Heart right ventricle (tissue), 16 donors: ENCODE measurements at regions of chr11 and their contacts with region 1.

Region 1: DNA sequence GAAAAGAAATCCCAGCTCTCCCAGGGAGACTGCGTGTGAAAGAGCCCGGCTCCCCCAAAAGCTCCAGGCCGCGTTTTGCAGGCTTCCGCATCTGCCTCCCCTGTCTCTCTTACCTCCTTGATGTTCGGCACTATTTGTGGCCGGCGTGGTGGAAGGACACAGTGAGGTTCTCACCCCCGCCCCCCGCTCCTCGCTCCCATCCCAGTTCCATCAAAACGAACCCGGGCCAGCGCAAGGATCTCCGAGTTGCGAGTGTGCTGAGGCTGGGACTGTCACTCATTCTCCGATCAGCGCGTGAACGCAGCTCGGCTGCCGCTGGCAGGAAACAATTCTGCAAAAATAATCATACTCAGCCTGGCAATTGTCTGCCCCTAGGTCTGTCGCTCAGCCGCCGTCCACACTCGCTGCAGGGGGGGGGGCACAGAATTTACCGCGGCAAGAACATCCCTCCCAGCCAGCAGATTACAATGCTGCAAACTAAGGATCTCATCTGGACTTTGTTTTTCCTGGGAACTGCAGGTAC is at the start of gene NCAM1:
- DNase-seq: peak; percentile 85 to 88
- ATAC-seq: peak; percentile 35 to 79 (median 69)
- H3K4me3 ChIP-seq: peak within 1 kb of the TSS; percentile 29 to 78 (median 64)
- H3K27ac ChIP-seq: peak within 1 kb of the TSS; percentile 49 to 88 (median 80)
- H3K4me1 ChIP-seq: peaks cover 0 to 34% (median 11%) of the 10 kb centered on the region in 9 donors
- H3K27me3 ChIP-seq: peaks cover 0 to 98% (median 35%) of the 10 kb centered on the region in 7 donors
- CTCF ChIP-seq: no peak
- total RNA-seq, gene NCAM1: 220 to 454 (median 338) TPM

Region 2: DNA sequence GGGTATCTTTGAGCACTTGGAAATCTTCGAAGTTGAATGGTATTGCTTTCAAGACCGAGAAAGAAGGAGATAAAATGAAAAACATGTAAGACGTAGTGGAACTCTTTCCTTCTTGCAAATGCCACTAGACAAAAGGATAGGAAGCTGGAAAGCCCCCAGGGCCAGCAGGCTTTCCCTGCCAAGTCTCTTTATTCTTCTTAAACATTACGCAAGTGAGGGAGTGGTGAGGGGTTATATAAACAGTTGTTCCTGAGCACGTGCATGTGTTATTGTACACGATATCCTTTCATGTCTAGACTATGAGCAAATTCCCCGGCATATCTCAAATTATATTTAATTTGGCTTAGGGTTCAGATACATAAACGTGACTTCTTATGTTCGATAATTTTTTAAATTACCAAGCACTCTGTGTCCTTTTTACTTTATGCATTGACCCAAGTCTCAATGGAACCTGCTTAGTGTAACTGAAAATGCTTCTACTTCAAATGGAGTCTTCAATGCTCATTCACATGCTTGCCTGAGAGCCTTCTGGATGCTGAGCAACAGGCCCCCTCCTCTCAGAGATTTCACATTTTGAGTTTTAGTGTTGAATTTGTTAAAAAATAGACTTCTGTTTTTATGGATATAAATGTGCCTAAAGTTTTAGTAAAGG is 1254.0 kb before region 1 on chr11:
- intact Hi-C with region 1: no loop called
- DNase-seq: peak; percentile 38 to 61
- ATAC-seq: peak; percentile 29 to 93 (median 86)
- H3K4me3 ChIP-seq: no peak overlapping the region
- H3K27ac ChIP-seq: peak overlapping the region in 6 of 10 donors; percentile 2 to 67 (median 37)
- H3K4me1 ChIP-seq: peaks cover 0 to 30% (median 11%) of the 10 kb centered on the region in 9 donors
- H3K27me3 ChIP-seq: no peaks in the 10 kb centered on the region
- CTCF ChIP-seq: no peak

Region 3: DNA sequence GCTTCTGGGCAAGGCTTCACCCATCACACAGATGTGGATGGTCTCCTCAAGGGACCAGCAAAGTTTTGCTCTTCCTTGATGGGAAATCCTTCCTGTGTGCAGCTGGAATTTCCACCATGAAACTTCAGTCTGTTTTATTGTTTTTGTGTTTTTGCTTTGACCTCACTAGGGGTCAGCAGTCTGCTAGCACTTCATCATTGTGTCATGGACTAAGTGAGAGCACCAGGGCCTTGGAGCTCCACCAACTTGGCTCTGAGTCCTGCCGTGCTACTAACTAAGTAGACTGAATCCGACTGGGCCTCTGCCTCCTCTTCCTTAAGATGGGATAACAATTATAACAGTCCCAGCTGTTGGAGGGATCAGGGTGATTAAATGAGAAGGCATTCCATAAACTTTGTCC is 305.8 kb before region 1 on chr11:
- intact Hi-C with region 1: loop called in 2 of 10 experiments (anchors 5 to 10 kb)
- DNase-seq: peak; percentile 74 to 87
- ATAC-seq: peak; percentile 55 to 87 (median 84)
- H3K4me3 ChIP-seq: no peak overlapping the region
- H3K27ac ChIP-seq: peak overlapping the region in 7 of 10 donors; percentile 17 to 72 (median 48)
- H3K4me1 ChIP-seq: peaks cover 8 to 67% (median 22%) of the 10 kb centered on the region in 9 donors
- H3K27me3 ChIP-seq: no peaks in the 10 kb centered on the region
- CTCF ChIP-seq: peak in 6 of 9 donors; percentile 8 to 47 (median 29)

Region 4: DNA sequence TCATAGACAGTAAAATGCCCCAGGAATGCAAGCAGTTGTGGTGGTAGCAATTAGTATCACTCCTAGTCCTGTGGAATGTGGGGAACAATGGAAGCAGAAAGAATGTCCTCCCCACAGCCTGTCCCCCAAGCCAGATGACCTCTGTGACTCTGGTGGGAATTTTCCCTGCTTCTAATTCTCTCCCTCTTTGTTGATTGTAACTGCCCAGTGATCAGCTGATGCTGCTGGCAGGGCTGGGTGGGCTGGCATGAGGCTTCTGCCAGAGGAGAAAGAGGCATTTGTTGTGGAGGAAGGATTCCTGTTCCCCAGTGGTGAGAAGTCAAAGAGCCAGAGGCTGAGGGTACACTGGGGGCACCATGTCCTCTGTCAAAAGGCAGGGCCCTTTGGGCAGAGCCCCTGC is 116.7 kb before region 1 on chr11:
- intact Hi-C with region 1: loop called in 4 of 10 experiments (anchors 5 to 10 kb)
- DNase-seq: peak in 1 of 2 donors; percentile 13
- ATAC-seq: peak in 6 of 8 donors; percentile 33 to 72 (median 48)
- H3K4me3 ChIP-seq: no peak overlapping the region
- H3K27ac ChIP-seq: peak overlapping the region in 2 of 10 donors; percentile 19 to 35
- H3K4me1 ChIP-seq: peaks cover 0 to 7% (median 0%) of the 10 kb centered on the region in 9 donors
- H3K27me3 ChIP-seq: no peaks in the 10 kb centered on the region
- CTCF ChIP-seq: no peak

Region 5: GRCh38 chr11:112881461-112881860 is 79.7 kb before region 1 on chr11:
- intact Hi-C with region 1: loop called in 1 of 10 experiments (anchors 5 kb)
- DNase-seq: peak; percentile 71 to 80
- ATAC-seq: peak; percentile 91 to 95 (median 93)
- H3K4me3 ChIP-seq: peak overlapping the region in 9 of 10 donors; percentile 22 to 53 (median 43)
- H3K27ac ChIP-seq: peak overlapping the region in 9 of 10 donors; percentile 44 to 89 (median 72)
- H3K4me1 ChIP-seq: peaks cover 0 to 31% (median 12%) of the 10 kb centered on the region in 9 donors
- H3K27me3 ChIP-seq: no peaks in the 10 kb centered on the region
- CTCF ChIP-seq: no peak

Region 6: DNA sequence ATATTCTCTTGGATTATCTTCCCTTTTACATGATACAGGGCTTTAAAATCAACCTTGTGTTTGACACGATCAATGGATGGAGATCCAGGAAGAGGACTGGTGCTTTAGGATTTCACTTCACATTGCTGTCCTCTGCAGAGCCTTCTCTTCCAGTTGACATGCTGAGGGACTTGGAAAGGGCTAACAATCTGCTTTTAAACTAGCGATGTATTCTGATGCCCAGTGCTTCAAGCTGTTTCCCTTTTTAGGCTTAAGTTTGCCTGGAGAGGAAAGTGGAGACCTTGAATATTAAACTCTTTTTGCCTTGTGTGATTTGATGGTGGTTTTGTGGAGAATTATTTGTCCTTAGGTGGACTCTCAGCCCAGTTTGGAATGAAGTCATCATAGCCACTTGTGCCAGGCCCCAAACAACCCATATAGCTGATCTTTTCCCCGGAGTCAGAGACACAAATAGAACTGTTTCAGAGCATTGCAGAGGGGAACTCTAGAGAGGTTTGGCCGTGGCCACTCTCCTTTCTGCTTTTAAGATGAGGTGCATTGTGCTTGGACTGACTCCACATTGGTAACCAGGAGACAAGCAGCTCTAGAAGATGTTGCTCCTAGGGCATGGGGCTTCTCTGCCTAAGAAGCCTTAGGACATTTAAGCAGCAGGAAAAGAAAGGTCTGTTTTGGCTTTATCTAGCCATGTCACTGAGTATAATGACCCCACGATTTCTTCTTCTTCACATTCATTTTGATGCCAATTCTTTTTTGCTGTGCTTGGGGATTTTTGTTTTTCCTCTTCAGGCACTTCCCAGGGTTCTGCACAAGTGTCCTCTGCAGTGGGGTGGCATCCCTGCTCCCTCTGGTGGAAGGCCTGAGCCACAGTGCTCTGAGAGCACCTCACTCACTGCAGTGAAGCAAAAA is 152.8 kb after region 1 on chr11:
- intact Hi-C with region 1: loop called in 5 of 10 experiments (anchors 2 to 5 kb)
- DNase-seq: peak; percentile 43 to 59
- ATAC-seq: peak; percentile 89 to 95 (median 92)
- H3K4me3 ChIP-seq: no peak overlapping the region
- H3K27ac ChIP-seq: peak overlapping the region in 9 of 10 donors; percentile 25 to 71 (median 51)
- H3K4me1 ChIP-seq: peaks cover under 1 to 74% (median 25%) of the 10 kb centered on the region in 9 donors
- H3K27me3 ChIP-seq: peaks cover 0 to 2% (median 0%) of the 10 kb centered on the region in 7 donors
- CTCF ChIP-seq: peak; percentile 41 to 80 (median 68)

Region 7: DNA sequence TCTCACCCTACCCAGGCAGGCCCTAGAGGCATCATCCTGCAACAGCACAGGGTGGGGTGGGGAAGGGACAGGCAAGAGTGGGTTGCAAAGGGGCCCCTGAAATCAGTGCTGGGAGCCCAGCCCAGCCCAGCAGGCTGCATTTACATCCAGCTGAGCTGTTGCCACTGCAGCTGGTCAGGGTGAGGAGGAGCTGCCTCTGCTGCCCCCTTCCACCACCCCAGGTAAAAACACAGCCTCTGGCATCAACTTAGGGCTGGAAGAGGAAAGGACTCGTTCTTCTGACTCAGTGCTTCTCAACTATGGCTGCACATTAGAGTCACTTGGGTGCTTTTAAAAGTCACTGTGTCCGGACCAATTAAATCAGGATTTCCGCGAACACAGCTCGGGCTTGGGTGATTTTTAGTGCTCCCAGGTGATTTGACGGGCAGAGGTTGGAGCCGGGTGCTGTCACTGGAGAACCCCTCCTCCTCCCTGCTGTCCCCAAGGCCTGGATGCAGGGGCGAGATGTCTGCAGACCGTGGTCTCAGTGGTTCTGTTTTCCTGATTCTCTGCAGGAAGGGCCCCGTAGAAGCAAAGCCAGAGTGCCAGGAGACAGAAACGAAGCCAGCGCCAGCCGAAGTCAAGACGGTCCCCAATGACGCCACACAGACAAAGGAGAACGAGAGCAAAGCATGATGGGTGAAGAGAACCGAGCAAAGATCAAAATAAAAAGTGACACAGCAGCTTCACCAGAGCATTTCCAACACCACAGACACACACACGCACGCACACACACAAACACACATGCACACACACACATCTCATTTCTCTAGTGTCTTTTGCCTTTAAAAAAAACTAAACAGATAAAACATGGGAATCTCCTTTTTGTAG is 313.7 kb after region 1 on chr11:
- intact Hi-C with region 1: loop called in 1 of 10 experiments (anchors 10 kb)
- DNase-seq: no peak
- ATAC-seq: peak in 3 of 8 donors; percentile 28 to 48 (median 41)
- H3K4me3 ChIP-seq: no peak overlapping the region
- H3K27ac ChIP-seq: no peak overlapping the region
- H3K4me1 ChIP-seq: peaks cover 0 to 5% (median 0%) of the 10 kb centered on the region in 9 donors
- H3K27me3 ChIP-seq: no peaks in the 10 kb centered on the region
- CTCF ChIP-seq: peak in 5 of 9 donors; percentile 14 to 35 (median 20)